ENCODE measurements at regions of chr6 and their contacts with region 1.

Region 1: DNA sequence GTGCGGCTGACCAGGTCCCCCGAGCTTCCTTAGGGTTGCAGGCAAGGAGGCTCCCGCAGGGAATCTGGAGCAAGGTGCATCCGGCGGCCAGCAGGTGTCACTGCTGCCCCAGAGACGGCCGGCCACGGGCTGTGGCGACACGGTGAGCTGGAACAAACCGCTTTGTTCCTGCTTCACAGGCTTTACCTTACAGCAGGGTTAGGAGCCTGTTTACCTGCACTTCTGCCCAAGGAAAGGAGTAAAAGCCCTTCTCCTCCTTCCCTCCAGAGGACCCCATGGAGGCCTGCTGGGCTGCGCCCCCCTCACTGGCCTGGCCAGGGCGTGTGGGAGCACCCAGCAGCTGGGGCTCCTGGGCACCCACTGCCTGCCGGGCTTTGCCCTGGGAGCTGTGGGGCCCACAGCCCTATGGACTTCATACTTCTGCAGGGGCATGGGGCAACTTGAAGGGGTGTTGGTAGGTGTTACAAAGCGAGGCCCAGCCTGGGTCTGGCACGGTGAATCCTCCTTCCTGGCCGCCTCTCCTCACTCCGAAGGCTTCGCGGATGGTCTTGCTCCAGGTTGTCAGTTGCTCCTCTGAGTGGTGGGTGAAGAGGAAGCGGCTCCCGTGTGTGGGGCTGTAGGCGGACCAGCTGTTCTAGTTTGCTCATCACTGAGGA is 88.4 kb downstream of the CDC5L start:
- DNase-seq: peak; percentile 61
- H3K4me3 Mint-ChIP-seq: no peak overlapping the region
- H3K27ac Mint-ChIP-seq: no peak overlapping the region
- H3K4me1 Mint-ChIP-seq: no peaks in the 10 kb centered on the region
- H3K27me3 Mint-ChIP-seq: peaks cover 13% of the 10 kb centered on the region

Region 2: DNA sequence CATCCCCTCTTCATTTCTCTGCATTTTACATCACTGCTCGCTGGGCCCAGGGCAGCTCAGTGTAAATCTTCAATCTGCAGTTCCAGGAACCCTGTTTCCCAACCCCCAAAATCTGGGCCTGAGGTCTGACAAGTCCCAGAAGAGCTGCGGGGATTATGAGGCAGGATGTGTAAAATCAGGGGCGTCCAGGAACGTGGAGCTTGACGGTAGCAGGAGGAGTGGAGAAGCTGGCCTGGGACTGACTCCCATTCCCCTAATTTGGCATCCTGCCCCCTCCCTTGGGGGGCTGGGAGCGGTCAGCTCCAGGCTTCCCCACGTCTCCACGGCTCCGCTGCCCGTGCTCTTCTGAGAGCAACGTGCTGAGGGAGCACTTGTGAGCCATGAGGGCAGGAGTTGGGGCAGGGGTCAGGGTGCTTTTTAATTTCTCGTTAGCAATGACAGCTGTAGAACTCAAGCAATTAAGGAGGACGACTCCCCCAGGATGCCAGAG is 729.2 kb before region 1 on chr6:
- intact Hi-C with region 1: no loop called
- DNase-seq: no peak
- H3K4me3 Mint-ChIP-seq: no peak overlapping the region
- H3K27ac Mint-ChIP-seq: no peak overlapping the region
- H3K4me1 Mint-ChIP-seq: no peaks in the 10 kb centered on the region
- H3K27me3 Mint-ChIP-seq: peaks cover 9% of the 10 kb centered on the region

Region 3: GRCh38 chr6:44415873-44416502 is 59.9 kb before region 1 on chr6:
- intact Hi-C with region 1: no loop called
- DNase-seq: no peak
- H3K4me3 Mint-ChIP-seq: no peak overlapping the region
- H3K27ac Mint-ChIP-seq: no peak overlapping the region
- H3K4me1 Mint-ChIP-seq: peaks cover 35% of the 10 kb centered on the region
- H3K27me3 Mint-ChIP-seq: no peaks in the 10 kb centered on the region

Region 4: GRCh38 chr6:44524476-44525227 is 48.7 kb after region 1 on chr6:
- intact Hi-C with region 1: no loop called
- DNase-seq: no peak
- H3K4me3 Mint-ChIP-seq: no peak overlapping the region
- H3K27ac Mint-ChIP-seq: no peak overlapping the region
- H3K4me1 Mint-ChIP-seq: peaks cover 31% of the 10 kb centered on the region
- H3K27me3 Mint-ChIP-seq: peaks cover 7% of the 10 kb centered on the region

Region 5: GRCh38 chr6:44556046-44556445 is 80.1 kb after region 1 on chr6:
- intact Hi-C with region 1: no loop called
- DNase-seq: no peak
- H3K4me3 Mint-ChIP-seq: no peak overlapping the region
- H3K27ac Mint-ChIP-seq: no peak overlapping the region
- H3K4me1 Mint-ChIP-seq: no peaks in the 10 kb centered on the region
- H3K27me3 Mint-ChIP-seq: peaks cover 23% of the 10 kb centered on the region

Region 6: GRCh38 chr6:44593539-44593944 is 117.6 kb after region 1 on chr6:
- intact Hi-C with region 1: loop called (anchors 1 kb)
- DNase-seq: peak; percentile 10
- H3K4me3 Mint-ChIP-seq: no peak overlapping the region
- H3K27ac Mint-ChIP-seq: no peak overlapping the region
- H3K4me1 Mint-ChIP-seq: peaks cover 5% of the 10 kb centered on the region
- H3K27me3 Mint-ChIP-seq: peaks cover 8% of the 10 kb centered on the region

Region 7: DNA sequence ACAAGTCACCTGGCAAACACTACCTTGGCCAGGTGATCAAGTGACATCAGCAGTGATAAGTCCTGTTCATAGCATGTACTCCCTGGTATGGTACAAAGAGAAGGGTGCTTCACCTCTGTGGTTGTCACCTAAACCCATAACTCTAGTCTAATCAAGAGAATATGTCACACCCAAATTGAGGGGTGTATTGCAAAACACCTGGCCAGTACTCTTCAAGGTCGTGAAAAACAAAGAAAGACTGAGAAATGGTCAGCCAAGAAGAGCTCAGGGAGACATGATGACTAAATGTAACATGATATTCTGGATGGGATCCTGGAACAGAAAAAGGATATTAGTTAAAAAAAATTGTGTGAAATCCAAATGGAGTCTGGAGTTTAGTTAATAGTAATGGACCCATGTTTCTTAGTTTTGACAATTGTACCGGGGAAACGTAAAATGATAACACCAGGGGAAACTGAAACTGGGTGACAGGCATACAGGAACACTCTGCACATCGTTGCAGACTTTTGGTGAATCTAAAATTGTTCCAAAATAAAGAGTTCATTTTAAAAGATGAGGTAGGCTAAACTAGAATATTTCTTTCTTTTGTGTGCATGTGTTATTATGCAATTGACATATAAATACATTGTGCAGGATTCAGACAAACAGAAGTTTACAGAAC is 173.6 kb after region 1 on chr6:
- intact Hi-C with region 1: loop called (anchors 5 kb)
- DNase-seq: no peak
- H3K4me3 Mint-ChIP-seq: no peak overlapping the region
- H3K27ac Mint-ChIP-seq: no peak overlapping the region
- H3K4me1 Mint-ChIP-seq: peaks cover 4% of the 10 kb centered on the region
- H3K27me3 Mint-ChIP-seq: peaks cover 5% of the 10 kb centered on the region

Measured in activated T-helper 1 cell treated with anti-CD3 and anti-CD28 coated beads, Interleukin-12 subunit alpha, Interleukin-12 subunit beta, Interleukin-2, Interleukin-4 antibody, amounts not matched to agents 30 ng/mL and 10 ng/mL and 1 ng/mL, durations not matched to agents 14 hours and 24 hours and 36 hours (primary cell).